Left colon (tissue), 2 donors: ENCODE measurements at regions of chr12 and their contacts with region 1.

Region 1: GRCh38 chr12:8823565-8824300 is 1.3 kb downstream of the A2ML1 start:
- DNase-seq: no peak
- ATAC-seq: no peak

Region 2: GRCh38 chr12:8681041-8681902 is 142.5 kb before region 1 on chr12:
- intact Hi-C with region 1: loop called (anchors 5 to 10 kb)
- DNase-seq: no peak
- ATAC-seq: peak; percentile 59

Region 3: DNA sequence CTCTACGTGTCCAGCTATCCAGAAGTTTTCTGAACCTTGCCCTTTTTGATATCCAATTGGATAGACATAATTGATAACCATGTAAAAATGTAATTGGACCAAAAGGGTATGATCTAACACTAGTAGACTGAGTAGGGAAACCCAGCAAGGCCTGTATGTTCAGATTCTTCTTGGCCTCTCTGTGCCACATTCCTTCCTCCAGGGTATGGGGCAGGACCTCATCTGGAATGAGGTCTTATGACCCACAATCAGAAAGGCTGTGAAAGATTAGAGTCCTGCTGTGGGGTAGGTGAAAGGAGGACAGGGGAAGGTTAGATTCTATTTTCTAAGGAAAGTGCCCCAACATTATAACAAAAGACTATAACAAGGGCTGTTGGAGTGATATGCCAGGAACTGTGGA is 52.7 kb before region 1 on chr12:
- intact Hi-C with region 1: no loop called
- DNase-seq: no peak
- ATAC-seq: no peak